Activated CD4-positive, alpha-beta T cell treated with anti-CD3 and anti-CD28 coated beads for 36 hours (primary cell): ENCODE measurements at regions of chr14 and their contacts with region 1.

Region 1: DNA sequence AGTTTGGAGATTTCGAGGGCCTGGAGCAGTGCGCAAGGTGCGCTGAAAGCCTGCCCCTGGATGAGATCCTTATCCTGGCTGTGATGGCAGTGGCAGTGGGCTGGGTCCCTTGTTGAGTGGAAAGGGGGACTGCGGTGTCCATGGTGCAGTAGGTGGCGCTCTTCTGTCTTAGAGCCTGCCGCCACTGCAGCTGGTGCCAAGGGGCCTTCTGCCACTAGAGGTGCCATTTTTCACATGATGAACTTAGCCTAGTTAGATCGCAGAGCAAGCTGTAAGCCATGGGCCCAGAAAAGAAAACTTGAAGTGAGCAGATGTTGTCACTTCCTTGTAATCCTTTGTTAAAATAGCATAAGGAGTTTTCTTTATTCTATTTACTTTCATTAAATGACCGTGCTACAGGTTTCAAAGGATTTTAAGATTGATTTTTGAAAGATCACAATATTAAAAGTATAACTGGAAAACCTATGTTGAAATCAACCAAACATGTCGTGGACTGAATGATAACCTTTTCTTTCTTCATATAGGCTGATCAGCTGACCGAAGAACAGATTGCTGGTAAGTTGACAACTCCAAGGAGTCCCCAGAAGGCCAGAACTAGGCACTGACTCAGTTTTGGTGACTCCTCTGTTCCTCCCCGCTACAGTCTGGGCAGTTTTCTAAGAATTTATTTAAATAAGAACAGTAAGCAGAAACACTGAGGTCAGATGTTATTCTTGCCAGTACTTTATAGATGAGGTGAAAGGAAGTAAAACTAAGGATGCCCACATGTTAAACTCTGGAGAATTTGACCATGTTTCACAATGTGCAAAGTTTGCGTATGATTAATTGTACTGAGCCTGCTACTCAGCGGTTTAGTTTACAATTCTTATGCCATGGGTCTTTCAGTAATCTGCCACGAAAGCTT is 3.0 kb downstream of the CALM1 start:
- DNase-seq: peak; percentile 93
- ATAC-seq: peak; percentile 62
- H3K4me3 Mint-ChIP-seq: peak overlapping the region; percentile 97
- H3K27ac Mint-ChIP-seq: peak overlapping the region; percentile 95
- H3K4me1 Mint-ChIP-seq: peaks cover 53% of the 10 kb centered on the region
- H3K27me3 Mint-ChIP-seq: no peaks in the 10 kb centered on the region

Region 2: GRCh38 chr14:90140298-90140955 is 259.4 kb before region 1 on chr14:
- CTCF ChIA-PET with region 1: no interaction called
- POLR2A ChIA-PET with region 1: no interaction called
- intact Hi-C with region 1: no loop called
- DNase-seq: no peak
- ATAC-seq: no peak
- H3K4me3 Mint-ChIP-seq: no peak overlapping the region
- H3K27ac Mint-ChIP-seq: no peak overlapping the region
- H3K4me1 Mint-ChIP-seq: no peaks in the 10 kb centered on the region
- H3K27me3 Mint-ChIP-seq: peaks cover 11% of the 10 kb centered on the region

Region 3: GRCh38 chr14:90331497-90332435 is 68.0 kb before region 1 on chr14 and contains the start of gene NRDE2:
- CTCF ChIA-PET with region 1: interaction called, 3 read pairs
- POLR2A ChIA-PET with region 1: no interaction called
- intact Hi-C with region 1: loop called (anchors 1 to 2 kb)
- DNase-seq: peak; percentile 99
- ATAC-seq: peak; percentile 99
- H3K4me3 Mint-ChIP-seq: peak within 1 kb of the TSS; percentile 89
- H3K27ac Mint-ChIP-seq: peak within 1 kb of the TSS; percentile 93
- H3K4me1 Mint-ChIP-seq: peaks cover 23% of the 10 kb centered on the region
- H3K27me3 Mint-ChIP-seq: peaks cover 2% of the 10 kb centered on the region
- total RNA-seq, gene NRDE2: 22.8 to 25.3 TPM

Region 4: GRCh38 chr14:90518941-90519256 is 119.1 kb after region 1 on chr14:
- CTCF ChIA-PET with region 1: interaction called, 4 read pairs
- POLR2A ChIA-PET with region 1: no interaction called
- intact Hi-C with region 1: loop called (anchors 1 to 5 kb)
- DNase-seq: peak; percentile 68
- ATAC-seq: peak; percentile 76
- H3K4me3 Mint-ChIP-seq: no peak overlapping the region
- H3K27ac Mint-ChIP-seq: no peak overlapping the region
- H3K4me1 Mint-ChIP-seq: no peaks in the 10 kb centered on the region
- H3K27me3 Mint-ChIP-seq: no peaks in the 10 kb centered on the region

Region 5: DNA sequence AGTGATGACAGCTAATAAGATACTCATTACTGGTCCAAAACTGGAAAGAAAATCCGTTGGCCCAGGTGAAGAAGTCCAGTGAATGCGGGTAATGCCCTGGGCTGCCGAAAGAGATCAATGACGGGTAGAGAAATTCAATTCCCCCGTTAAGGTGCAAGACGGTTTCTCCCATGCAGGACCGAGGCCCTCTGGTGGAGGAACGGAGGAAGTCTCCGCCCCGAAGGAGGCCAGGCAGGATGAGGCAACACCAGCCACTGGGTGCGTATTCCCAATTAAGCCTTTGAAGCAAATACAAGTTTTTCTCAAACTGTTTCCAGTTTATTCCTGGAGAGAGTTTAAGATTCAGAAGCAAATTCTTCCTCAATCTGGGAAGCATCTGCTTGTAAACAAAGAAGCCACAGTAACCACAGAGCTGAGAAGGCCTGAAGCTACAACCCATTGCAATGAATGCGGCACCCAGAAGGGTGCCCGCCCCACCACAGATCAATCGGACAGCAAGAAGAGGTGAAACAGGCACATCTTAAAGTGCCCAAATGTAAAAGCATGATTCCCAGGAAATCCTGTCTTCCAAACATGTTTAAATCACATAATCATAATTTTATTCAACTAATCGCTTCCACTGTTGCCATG is 297.9 kb after region 1 on chr14:
- CTCF ChIA-PET with region 1: interaction called, 6 read pairs
- POLR2A ChIA-PET with region 1: no interaction called
- intact Hi-C with region 1: loop called (anchors 1 kb)
- DNase-seq: peak; percentile 87
- ATAC-seq: peak; percentile 95
- H3K4me3 Mint-ChIP-seq: no peak overlapping the region
- H3K27ac Mint-ChIP-seq: no peak overlapping the region
- H3K4me1 Mint-ChIP-seq: no peaks in the 10 kb centered on the region
- H3K27me3 Mint-ChIP-seq: no peaks in the 10 kb centered on the region

Region 6: GRCh38 chr14:91249841-91250616 is 850.2 kb after region 1 on chr14:
- CTCF ChIA-PET with region 1: no interaction called
- POLR2A ChIA-PET with region 1: no interaction called
- intact Hi-C with region 1: loop called in 1 of 2 experiments (anchors 5 kb)
- DNase-seq: peak; percentile 55
- ATAC-seq: no peak
- H3K4me3 Mint-ChIP-seq: peak overlapping the region; percentile 21
- H3K27ac Mint-ChIP-seq: peak overlapping the region; percentile 84
- H3K4me1 Mint-ChIP-seq: peaks cover 87% of the 10 kb centered on the region
- H3K27me3 Mint-ChIP-seq: no peaks in the 10 kb centered on the region